Head of caudate nucleus (tissue), 42 donors: ENCODE measurements at regions of chr18 and their contacts with region 1.

Region 1: DNA sequence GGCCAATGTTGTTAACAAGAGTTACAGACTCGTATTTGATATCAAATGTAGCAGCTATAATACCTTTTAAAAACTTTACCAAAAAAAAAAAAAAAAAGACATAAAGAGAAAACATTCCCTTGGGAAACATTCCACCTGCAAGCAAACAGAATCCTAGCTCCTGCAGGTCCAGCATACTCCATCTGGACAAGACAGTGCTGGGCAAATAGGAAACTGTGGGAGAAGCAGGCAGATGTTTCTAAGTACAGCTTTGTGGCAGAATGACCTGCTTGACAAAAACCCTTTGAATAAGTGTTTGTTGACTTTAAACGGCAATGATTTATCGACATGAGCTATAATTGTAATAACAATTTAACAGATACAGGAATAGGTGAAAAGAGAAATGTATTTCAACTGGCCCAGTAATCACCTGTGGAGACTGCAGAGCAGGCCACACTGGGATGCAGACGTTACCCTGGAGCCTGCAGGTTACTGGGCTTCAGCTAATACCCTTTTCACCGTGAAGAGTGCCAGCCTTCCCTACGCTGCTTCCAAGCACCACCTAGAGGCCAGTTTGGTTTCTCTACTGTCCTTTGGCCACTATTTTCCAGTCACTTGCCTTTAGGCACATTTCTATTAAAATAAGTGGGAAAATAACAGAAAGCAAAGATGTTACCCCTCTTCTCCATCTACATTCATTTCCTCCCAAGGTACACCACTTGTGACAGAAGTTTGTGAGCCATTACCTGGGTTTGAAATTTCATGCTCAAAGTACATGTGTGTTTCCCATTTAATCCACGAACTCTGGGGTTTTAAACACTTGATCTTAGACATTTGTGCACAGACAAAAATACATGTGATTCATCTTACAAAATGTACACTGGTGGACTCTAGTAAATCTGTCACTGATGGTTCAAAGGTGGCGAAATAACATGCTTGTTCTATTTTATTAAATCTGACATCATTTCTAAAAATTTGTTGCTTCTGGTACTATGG is 96.9 kb upstream of the ZNF397 start:
- DNase-seq: peak in 38 of 42 donors; percentile 32 to 88 (median 70)

Region 2: GRCh38 chr18:34661464-34662111 is 482.3 kb before region 1 on chr18:
- intact Hi-C with region 1: no loop called
- DNase-seq: peak in 9 of 42 donors; percentile 19 to 64 (median 30)

Region 3: DNA sequence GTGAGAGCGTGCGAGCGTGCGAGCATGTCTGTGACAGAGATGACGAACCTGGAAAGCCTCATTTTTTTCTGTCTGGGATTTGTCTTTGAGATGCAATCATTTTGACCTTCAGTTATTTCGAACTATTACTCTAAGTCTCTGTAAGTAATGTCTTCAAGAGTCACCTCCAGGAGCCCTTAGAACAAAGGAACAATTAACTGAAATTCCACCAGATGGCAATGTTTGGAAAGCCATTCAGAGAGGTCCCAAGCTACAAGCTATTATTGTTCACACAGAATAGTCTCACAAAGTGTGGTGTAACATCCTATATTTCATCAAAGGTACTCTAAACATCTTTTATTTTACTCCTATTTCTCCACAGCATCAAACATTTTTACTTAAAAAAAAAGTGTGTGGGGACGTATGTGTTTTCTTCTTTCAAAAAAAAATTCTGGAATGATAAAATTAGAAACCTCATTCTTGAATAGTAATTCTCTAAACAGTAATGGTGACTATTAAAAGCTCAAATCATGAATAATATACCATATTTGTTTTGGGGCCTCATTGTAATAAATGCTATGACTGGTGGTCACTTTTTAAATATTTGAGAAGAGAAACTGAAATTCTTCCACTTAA is 137.8 kb before region 1 on chr18:
- intact Hi-C with region 1: loop called (anchors 5 kb)
- DNase-seq: peak in 9 of 42 donors; percentile 32 to 79 (median 54)

Region 4: GRCh38 chr18:35203067-35203466 is 59.2 kb after region 1 on chr18:
- intact Hi-C with region 1: no loop called
- DNase-seq: no peak

Region 5: DNA sequence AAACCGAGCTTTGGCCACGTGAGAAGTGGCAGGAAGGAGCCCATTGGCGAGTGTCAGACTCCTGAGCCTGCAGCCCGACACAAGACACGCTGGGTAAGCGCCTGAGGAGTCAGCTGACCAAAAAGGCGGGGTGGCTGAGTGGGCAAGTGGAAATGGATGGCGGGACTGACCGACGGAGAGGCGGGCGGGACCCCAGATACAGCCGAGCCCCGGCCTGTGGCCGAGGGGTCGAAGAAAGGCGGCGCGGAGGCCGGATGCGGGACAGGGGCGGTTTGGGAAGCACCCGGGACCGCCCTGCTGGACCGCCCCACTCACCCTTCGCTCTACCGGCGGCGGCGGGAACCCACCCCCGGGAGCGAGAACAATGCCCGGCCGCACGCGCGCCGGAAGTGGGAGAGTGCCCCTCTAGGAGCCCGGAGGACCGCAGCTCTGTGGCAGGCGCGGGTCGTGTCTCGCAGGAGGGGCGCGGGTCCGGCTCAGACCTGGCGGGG is 123.3 kb after region 1 on chr18:
- intact Hi-C with region 1: no loop called
- DNase-seq: peak; percentile 75 to 92 (median 84)